MCF 10A (cell line): ENCODE measurements at regions of chr4 and their contacts with region 1.

Region 1: GRCh38 chr4:15238720-15239119 is 189.1 kb upstream of the C1QTNF7 start:
- DNase-seq: peak; percentile 62
- H3K4me3 Mint-ChIP-seq: no peak overlapping the region
- H3K27ac Mint-ChIP-seq: no peak overlapping the region
- H3K4me1 Mint-ChIP-seq: peaks cover 26% of the 10 kb centered on the region
- H3K27me3 Mint-ChIP-seq: no peaks in the 10 kb centered on the region
- CTCF ChIP-seq: peak; percentile 67

Region 2: GRCh38 chr4:14897217-14897616 is 341.5 kb before region 1 on chr4:
- CTCF ChIA-PET with region 1: no interaction called
- POLR2A ChIA-PET with region 1: no interaction called
- intact Hi-C with region 1: no loop called
- DNase-seq: peak; percentile 43
- H3K4me3 Mint-ChIP-seq: no peak overlapping the region
- H3K27ac Mint-ChIP-seq: no peak overlapping the region
- H3K4me1 Mint-ChIP-seq: peaks cover 13% of the 10 kb centered on the region
- H3K27me3 Mint-ChIP-seq: no peaks in the 10 kb centered on the region
- CTCF ChIP-seq: no peak

Region 3: GRCh38 chr4:14984448-14984847 is 254.3 kb before region 1 on chr4:
- CTCF ChIA-PET with region 1: no interaction called
- POLR2A ChIA-PET with region 1: no interaction called
- intact Hi-C with region 1: no loop called
- DNase-seq: peak; percentile 58
- H3K4me3 Mint-ChIP-seq: no peak overlapping the region
- H3K27ac Mint-ChIP-seq: no peak overlapping the region
- H3K4me1 Mint-ChIP-seq: no peaks in the 10 kb centered on the region
- H3K27me3 Mint-ChIP-seq: no peaks in the 10 kb centered on the region
- CTCF ChIP-seq: no peak

Region 4: DNA sequence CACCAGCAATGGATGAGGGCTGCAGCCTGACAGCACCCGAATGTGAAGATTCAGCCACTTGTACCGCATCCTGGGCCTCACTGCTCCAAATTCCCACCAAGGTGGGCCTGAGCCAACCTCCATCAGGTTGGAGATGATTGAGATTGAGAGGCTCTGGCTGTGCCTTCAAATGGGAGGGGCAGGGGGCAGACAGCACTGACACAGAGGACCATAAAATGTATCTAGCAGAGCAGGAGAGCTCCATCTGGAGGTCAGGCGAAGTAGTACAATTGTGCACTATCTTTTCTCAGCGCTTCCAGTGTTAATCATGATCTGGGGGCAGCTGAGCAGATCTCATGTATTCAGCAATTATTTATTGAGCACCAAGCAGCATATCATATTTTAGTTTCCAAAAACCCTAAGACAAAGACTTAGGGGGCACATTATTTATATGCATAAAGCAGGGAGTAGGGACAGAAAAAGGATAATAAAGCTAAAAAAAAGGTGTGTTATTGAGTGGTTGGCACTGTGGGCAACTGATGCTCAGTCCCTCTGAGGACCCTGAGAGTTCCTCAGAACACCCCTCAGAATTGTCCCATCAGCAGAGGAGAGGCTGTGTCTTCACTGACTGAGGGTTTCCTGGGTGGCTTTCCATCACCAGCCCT is 157.6 kb after region 1 on chr4:
- CTCF ChIA-PET with region 1: interaction called, 9 read pairs
- POLR2A ChIA-PET with region 1: no interaction called
- intact Hi-C with region 1: loop called (anchors 1 kb)
- DNase-seq: peak; percentile 63
- H3K4me3 Mint-ChIP-seq: no peak overlapping the region
- H3K27ac Mint-ChIP-seq: no peak overlapping the region
- H3K4me1 Mint-ChIP-seq: peaks cover 32% of the 10 kb centered on the region
- H3K27me3 Mint-ChIP-seq: no peaks in the 10 kb centered on the region
- CTCF ChIP-seq: peak; percentile 46

Region 5: GRCh38 chr4:15420642-15421041 is 181.9 kb after region 1 on chr4:
- CTCF ChIA-PET with region 1: interaction called, 8 read pairs
- POLR2A ChIA-PET with region 1: no interaction called
- intact Hi-C with region 1: loop called (anchors 1 kb)
- DNase-seq: peak; percentile 63
- H3K4me3 Mint-ChIP-seq: no peak overlapping the region
- H3K27ac Mint-ChIP-seq: no peak overlapping the region
- H3K4me1 Mint-ChIP-seq: peaks cover 18% of the 10 kb centered on the region
- H3K27me3 Mint-ChIP-seq: no peaks in the 10 kb centered on the region
- CTCF ChIP-seq: no peak

Region 6: GRCh38 chr4:15451866-15452765 is 213.4 kb after region 1 on chr4:
- CTCF ChIA-PET with region 1: interaction called, 122 read pairs
- POLR2A ChIA-PET with region 1: interaction called, 8 read pairs
- intact Hi-C with region 1: loop called (anchors 1 kb)
- DNase-seq: peak; percentile 80
- H3K4me3 Mint-ChIP-seq: no peak overlapping the region
- H3K27ac Mint-ChIP-seq: peak overlapping the region; percentile 5
- H3K4me1 Mint-ChIP-seq: peaks cover 30% of the 10 kb centered on the region
- H3K27me3 Mint-ChIP-seq: no peaks in the 10 kb centered on the region
- CTCF ChIP-seq: no peak